IMR-90 (cell line): ENCODE measurements at regions of chr16 and their contacts with region 1.

Region 1: DNA sequence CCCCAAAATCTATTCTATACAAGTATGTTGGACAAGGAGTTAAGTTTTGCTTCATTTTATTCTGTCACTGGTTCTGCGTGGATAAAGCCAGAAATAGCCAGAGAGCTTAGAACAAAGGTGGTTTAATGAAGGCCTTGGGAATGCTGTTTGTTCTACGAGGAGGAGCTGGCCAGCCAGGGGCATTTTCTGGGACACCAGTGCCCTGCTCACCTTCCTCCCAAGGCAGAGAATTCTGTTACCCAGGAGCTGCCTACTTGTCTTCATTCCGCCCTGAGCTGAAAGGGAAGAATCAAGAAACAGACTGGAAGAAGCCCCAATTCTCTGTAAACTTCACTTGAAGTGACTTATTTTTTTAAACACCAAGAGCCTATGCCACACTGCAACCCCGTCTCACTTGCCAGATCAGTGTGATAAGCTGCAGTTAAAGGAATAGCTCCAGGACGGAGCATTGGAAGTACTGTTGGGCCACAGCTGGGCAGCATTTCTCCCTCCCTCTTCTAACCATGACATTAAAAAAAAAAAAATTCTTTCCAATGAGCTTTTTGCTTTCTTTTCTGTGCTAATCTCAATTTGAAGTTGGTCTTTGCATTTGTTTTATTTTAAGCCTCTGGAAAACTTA is 149.8 kb upstream of the DYNLRB2 start:
- DNase-seq: no peak
- ATAC-seq: no peak
- H3K4me3 ChIP-seq: no peak overlapping the region
- H3K27ac ChIP-seq: no peak overlapping the region
- H3K4me1 ChIP-seq: no peaks in the 10 kb centered on the region
- H3K27me3 ChIP-seq: no peaks in the 10 kb centered on the region
- CTCF ChIP-seq: no peak
- POLR2A ChIP-seq: no peak
- RAD21 ChIP-seq: no peak

Region 2: GRCh38 chr16:80347900-80348299 is 43.1 kb before region 1 on chr16:
- CTCF ChIA-PET with region 1: no interaction called
- POLR2A ChIA-PET with region 1: no interaction called
- dilution Hi-C with region 1: no loop called
- in situ Hi-C with region 1: no loop called
- intact Hi-C with region 1: loop called (anchors 2 kb)
- DNase-seq: no peak
- ATAC-seq: no peak
- H3K4me3 ChIP-seq: no peak overlapping the region
- H3K27ac ChIP-seq: no peak overlapping the region
- H3K4me1 ChIP-seq: no peaks in the 10 kb centered on the region
- H3K27me3 ChIP-seq: no peaks in the 10 kb centered on the region; the same call in 1 of the 2 replicates
- CTCF ChIP-seq: no peak
- POLR2A ChIP-seq: no peak
- RAD21 ChIP-seq: no peak